Sciatic nerve (tissue), 2 donors: ENCODE measurements at regions of chr3 and their contacts with region 1.

Region 1: DNA sequence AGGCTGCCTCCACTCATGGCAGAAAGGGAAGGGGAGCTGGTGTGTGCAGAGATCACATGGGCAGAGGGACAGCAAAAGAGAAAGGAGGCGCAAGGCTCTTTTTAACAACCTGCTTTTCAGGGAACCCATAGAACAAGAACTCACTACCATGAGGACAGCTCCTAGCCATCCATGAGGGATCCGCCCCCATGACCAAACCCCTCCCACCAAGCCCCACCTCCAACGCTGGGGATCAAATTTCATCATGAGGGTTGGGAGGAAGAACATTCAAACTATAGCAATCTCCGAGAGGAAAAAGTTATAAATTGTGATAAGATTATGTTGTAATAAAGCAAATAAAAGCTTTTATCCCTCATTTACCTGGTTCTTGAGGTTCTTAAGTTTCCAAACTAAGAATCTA is 84.7 kb upstream of the LMCD1 start:
- DNase-seq: no peak
- ATAC-seq: peak; percentile 17

Region 2: DNA sequence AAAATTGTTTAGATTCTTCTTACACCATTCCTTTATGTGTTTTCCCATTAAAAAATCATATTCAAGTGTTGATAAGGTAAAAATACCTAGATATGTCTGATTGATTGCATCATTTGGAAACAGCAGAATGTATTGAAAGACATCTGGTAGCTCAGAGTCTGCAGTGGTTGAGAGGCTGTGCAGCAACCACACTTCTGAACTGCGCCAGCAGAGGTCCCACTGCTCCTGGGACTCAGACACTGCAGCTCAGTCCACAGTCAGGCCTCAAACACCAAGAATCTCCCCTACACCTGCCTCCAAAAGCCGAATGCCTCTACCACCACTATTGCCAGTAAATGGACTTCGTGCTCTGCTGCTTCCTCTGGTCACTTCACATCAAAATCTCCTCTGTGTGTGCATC is 92.2 kb before region 1 on chr3:
- intact Hi-C with region 1: loop called (anchors 10 kb)
- DNase-seq: peak; percentile 54
- ATAC-seq: peak; percentile 73

Region 3: DNA sequence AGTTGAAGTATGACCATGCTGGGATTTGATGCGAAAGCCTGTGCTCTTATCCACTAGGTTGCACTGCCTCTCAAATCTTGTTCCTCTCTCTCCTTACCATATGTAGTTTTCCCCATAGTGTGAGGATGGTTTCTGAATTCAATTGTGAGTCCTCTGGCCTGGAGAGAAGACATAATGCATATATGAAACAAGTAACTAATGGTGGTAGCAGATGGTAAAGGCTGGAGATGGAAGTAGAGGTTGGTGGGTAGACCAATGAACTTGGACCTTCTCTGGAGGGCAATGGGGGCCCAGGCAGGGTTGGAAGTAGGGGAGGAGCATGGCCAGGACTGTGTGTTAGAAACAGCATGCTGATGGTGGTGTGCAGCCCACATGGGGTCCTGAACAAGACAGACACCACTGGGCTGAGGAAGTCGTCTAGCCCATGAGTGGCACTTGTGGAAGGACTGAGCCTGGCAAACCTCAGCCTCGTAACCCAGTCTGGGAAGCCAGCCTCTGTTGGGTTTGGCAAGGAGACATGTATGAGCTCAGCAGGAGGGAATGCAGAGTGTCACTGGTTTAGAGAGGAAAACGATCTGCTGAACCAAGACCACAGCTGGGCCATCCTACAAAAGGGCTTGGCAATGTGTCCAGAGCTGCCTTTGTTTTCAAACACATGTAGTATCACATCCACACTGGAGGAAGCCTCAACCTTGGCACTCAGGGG is 66.1 kb after region 1 on chr3:
- intact Hi-C with region 1: no loop called
- DNase-seq: peak; percentile 73
- ATAC-seq: peak; percentile 95